GM12878 (cell line): ENCODE measurements at regions of chr4 and their contacts with region 1.

Region 1: GRCh38 chr4:189792924-189793618 is 147.6 kb upstream of the FRG1 start:
- DNase-seq: no peak
- ATAC-seq: peak; percentile 89
- H3K4me3 ChIP-seq: no peak overlapping the region
- H3K27ac ChIP-seq: no peak overlapping the region
- H3K4me1 ChIP-seq: no peaks in the 10 kb centered on the region
- H3K27me3 ChIP-seq: no peaks in the 10 kb centered on the region
- CTCF ChIP-seq: peak; percentile 65 to 83 (median 77)
- EP300 ChIP-seq: no peak
- POLR2A ChIP-seq: no peak
- RAD21 ChIP-seq: peak; percentile 84

Region 2: GRCh38 chr4:189385098-189385497 is 408.0 kb before region 1 on chr4:
- CTCF ChIA-PET with region 1: no interaction called
- POLR2A ChIA-PET with region 1: no interaction called
- RAD21 ChIA-PET with region 1: no interaction called
- SMC1A ChIA-PET with region 1: no interaction called
- in situ Hi-C with region 1: no loop called
- intact Hi-C with region 1: no loop called
- DNase-seq: no peak
- ATAC-seq: no peak
- H3K4me3 ChIP-seq: no peak overlapping the region
- H3K27ac ChIP-seq: no peak overlapping the region
- H3K4me1 ChIP-seq: no peaks in the 10 kb centered on the region
- H3K27me3 ChIP-seq: no peaks in the 10 kb centered on the region
- CTCF ChIP-seq: no peak
- EP300 ChIP-seq: no peak
- POLR2A ChIP-seq: no peak
- RAD21 ChIP-seq: no peak

Region 3: GRCh38 chr4:189765301-189765700 is 27.8 kb before region 1 on chr4:
- CTCF ChIA-PET with region 1: no interaction called
- POLR2A ChIA-PET with region 1: no interaction called
- RAD21 ChIA-PET with region 1: no interaction called
- SMC1A ChIA-PET with region 1: no interaction called
- in situ Hi-C with region 1: no loop called
- intact Hi-C with region 1: no loop called
- DNase-seq: no peak
- ATAC-seq: no peak
- H3K4me3 ChIP-seq: no peak overlapping the region
- H3K27ac ChIP-seq: no peak overlapping the region
- H3K4me1 ChIP-seq: no peaks in the 10 kb centered on the region
- H3K27me3 ChIP-seq: no peaks in the 10 kb centered on the region
- CTCF ChIP-seq: no peak
- EP300 ChIP-seq: no peak
- POLR2A ChIP-seq: no peak
- RAD21 ChIP-seq: no peak

Region 4: GRCh38 chr4:189912170-189912569 is 119.1 kb after region 1 on chr4:
- CTCF ChIA-PET with region 1: interaction called, 19 read pairs
- POLR2A ChIA-PET with region 1: no interaction called
- RAD21 ChIA-PET with region 1: no interaction called
- SMC1A ChIA-PET with region 1: no interaction called
- in situ Hi-C with region 1: no loop called
- intact Hi-C with region 1: no loop called
- DNase-seq: no peak
- ATAC-seq: no peak
- H3K4me3 ChIP-seq: no peak overlapping the region
- H3K27ac ChIP-seq: no peak overlapping the region
- H3K4me1 ChIP-seq: no peaks in the 10 kb centered on the region
- H3K27me3 ChIP-seq: no peaks in the 10 kb centered on the region
- CTCF ChIP-seq: peak; percentile 11 to 43 (median 43); a peak in 4 of 6 replicates
- EP300 ChIP-seq: no peak
- POLR2A ChIP-seq: no peak
- RAD21 ChIP-seq: no peak